ENCODE measurements at regions of chr5 and their contacts with region 1.

Region 1: GRCh38 chr5:103347716-103348430 is 89.3 kb downstream of the MACIR start:
- DNase-seq: peak in 1 of 2 experiments; percentile 17
- H3K4me3 ChIP-seq: no peak overlapping the region
- H3K4me3 Mint-ChIP-seq: no peak overlapping the region
- H3K27ac Mint-ChIP-seq: peak overlapping the region; percentile 17
- H3K4me1 ChIP-seq: peaks cover 24% of the 10 kb centered on the region
- H3K4me1 Mint-ChIP-seq: no peaks in the 10 kb centered on the region
- H3K27me3 ChIP-seq: no peaks in the 10 kb centered on the region
- H3K27me3 Mint-ChIP-seq: no peaks in the 10 kb centered on the region
- CTCF ChIP-seq: no peak

Region 2: DNA sequence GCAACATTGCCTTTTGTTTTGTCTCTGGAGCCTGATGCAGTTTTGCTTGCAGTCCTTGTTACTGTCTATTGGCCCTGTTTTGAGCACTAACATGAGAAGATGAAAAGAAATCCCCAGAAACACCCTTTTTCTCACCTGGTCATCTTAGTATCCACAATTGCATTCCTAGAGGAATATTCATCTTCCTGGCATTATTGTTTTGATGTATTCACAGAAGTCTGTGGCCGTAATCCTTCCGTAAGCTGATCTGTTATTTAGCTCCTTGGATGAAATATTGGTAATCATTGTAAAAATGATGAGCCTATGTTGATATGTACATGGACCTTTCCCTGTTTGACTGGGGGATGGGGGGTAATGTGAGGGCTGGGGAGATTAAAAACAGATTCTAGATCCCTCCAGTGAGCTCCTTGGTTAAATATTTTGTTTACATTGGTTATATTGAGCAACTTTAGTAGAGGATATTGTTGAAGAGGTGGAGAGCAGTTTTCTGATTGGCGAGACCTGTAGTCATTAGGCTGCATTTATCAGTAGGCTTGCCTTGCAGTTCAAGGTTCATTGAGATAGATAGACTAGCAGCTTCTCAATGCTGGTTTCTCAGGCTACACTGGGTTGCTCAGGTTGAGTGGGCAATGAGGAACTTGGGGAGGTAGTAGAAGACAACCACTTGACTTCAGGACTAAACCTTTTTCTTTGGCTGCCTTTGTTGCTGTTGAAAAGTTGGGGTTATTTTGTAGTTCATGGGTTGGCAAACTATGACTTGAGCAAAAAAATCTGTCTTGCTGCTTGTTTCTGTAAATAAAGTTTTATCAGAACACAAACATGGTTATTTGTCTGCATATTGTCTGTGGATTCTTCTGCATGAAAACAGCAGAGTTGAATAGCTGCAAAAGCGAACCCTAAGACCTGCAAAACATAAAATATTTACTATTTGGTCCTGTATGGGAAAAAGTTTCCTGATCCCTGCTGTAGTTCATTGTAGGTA is 28.3 kb after region 1 on chr5:
- CTCF ChIA-PET with region 1: no interaction called
- POLR2A ChIA-PET with region 1: no interaction called
- intact Hi-C with region 1: loop called (anchors 2 kb)
- DNase-seq: peak; percentile 61 to 69
- H3K4me3 ChIP-seq: no peak overlapping the region
- H3K4me3 Mint-ChIP-seq: peak overlapping the region; percentile 42
- H3K27ac Mint-ChIP-seq: peak overlapping the region; percentile 23
- H3K4me1 ChIP-seq: peaks cover 34% of the 10 kb centered on the region
- H3K4me1 Mint-ChIP-seq: peaks cover 27% of the 10 kb centered on the region
- H3K27me3 ChIP-seq: no peaks in the 10 kb centered on the region
- H3K27me3 Mint-ChIP-seq: no peaks in the 10 kb centered on the region
- CTCF ChIP-seq: no peak